Sigmoid colon (tissue), 7 donors: ENCODE measurements at regions of chr19 and their contacts with region 1.

Region 1: GRCh38 chr19:56367829-56368711 is 25.3 kb downstream of the ZNF582 start:
- DNase-seq: peak; percentile 97
- H3K4me3 ChIP-seq: peak overlapping the region; percentile 57 to 73 (median 70)
- H3K27ac ChIP-seq: peak overlapping the region; percentile 84 to 92 (median 88)
- H3K4me1 ChIP-seq: peaks cover 0 to 16% (median 11%) of the 10 kb centered on the region in 4 donors
- H3K27me3 ChIP-seq: no peaks in the 10 kb centered on the region
- CTCF ChIP-seq: peak in 1 of 4 experiments; percentile 15
- EP300 ChIP-seq: no peak
- POLR2A ChIP-seq: no peak

Region 2: DNA sequence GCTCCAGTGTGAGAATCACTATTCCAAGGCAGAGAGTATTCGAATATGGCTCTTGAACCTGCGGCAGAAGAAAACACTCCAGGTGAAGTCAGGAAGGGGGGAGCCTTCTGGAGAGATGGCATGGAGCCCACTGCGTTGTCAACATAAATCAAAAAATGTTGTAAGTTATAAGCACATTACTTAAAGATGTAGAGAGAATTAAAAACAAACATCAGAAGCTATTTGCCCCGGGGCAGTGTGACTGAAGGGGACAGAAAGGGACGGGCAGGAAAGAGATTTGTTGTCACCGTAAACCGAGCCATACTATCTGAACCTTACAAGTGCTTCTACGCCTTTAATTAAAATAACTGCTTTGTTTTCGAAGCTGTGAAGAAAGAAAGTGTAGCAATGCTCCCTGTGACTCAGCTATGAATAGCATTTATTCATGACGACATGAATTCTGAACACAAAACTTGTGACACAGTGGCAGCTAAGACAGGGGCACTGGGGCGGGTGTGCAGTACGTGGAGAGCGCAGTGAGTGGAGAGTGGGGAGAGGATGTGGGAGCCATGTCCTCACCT is 277.1 kb before region 1 on chr19:
- intact Hi-C with region 1: no loop called
- DNase-seq: no peak
- H3K4me3 ChIP-seq: no peak overlapping the region
- H3K27ac ChIP-seq: peak overlapping the region in 3 of 4 donors; percentile 35 to 59 (median 49)
- H3K4me1 ChIP-seq: peaks cover 0 to 16% (median 9%) of the 10 kb centered on the region in 4 donors
- H3K27me3 ChIP-seq: no peaks in the 10 kb centered on the region
- CTCF ChIP-seq: no peak
- EP300 ChIP-seq: no peak
- POLR2A ChIP-seq: no peak

Region 3: GRCh38 chr19:56314562-56315077 is 53.5 kb before region 1 on chr19 and contains the start of gene ZSCAN5A:
- intact Hi-C with region 1: loop called (anchors 5 kb)
- DNase-seq: peak; percentile 99
- H3K4me3 ChIP-seq: peak within 1 kb of the TSS; percentile 47 to 76 (median 68)
- H3K27ac ChIP-seq: peak within 1 kb of the TSS; percentile 94 to 97 (median 95)
- H3K4me1 ChIP-seq: peaks cover 0 to 18% (median 11%) of the 10 kb centered on the region in 4 donors
- H3K27me3 ChIP-seq: no peaks in the 10 kb centered on the region
- CTCF ChIP-seq: no peak
- EP300 ChIP-seq: no peak
- POLR2A ChIP-seq: peak; percentile 14 to 40
- total RNA-seq, gene ZSCAN5A: 4.3 to 5.8 (median 5.4) TPM